ENCODE measurements at regions of chr4 and their contacts with region 1.

Region 1: DNA sequence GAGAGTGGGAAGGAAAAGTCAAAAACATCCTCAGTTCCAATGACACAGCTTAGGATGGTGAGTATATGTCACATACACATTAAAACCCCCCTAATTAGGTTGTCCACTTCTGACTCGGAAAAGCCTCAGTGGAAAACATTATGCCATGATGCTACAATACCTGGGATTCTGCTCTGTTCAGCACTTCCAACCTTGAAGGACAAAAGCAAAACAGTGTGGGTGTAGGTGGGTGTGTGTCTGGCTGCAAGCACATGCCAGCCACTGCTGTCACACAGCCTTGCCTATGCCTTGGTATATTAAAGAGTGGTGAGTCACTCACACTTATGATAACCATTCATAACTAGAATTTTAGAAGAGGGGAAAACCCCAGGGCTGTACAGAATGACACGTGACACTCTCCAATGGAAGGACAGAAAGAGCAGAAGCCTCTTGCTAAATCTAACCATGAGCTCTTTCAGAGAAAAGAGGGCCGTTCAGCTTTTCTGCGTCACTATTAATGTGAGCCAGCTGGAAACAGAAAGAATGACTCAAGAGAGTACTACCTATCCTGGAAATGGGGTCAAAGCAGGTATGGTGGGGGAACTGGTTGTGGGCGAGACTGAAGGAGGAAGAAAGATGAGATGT is 159.6 kb downstream of the TET2 start:
- DNase-seq: peak; percentile 84
- H3K4me3 Mint-ChIP-seq: no peak overlapping the region
- H3K27ac Mint-ChIP-seq: peak overlapping the region; percentile 87
- H3K4me1 Mint-ChIP-seq: peaks cover 24% of the 10 kb centered on the region
- H3K27me3 Mint-ChIP-seq: no peaks in the 10 kb centered on the region

Region 2: DNA sequence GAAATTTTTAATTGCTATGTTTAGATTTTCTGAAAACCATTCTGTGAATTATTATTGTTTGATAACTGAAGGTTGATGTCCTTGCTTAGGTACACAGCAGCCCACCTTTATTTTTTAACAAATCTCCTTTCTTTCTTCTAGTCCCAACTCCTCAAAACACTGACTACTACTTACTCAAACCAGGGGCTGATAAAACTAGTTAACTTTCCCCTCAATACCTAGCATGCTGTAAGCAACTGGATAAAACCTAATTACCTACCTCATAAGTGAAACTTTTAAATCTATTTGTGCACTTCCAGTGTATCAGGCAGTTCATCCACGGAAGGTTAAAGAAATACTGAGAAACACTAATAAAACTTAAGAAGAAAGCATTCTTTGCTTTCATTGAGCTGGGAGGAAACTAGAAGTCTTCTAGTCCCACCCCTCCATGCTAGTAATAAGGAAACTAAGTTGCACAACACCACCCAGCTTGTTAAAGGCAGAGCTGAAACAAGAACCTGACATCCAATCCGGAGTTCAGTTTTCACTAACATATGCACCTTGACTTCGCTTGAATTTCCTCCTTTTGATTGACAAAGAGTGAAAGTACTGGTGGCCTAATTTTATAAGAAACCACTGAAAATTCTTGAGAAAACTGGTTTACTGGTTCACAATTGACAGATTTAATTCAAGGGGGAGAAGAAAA is 339.8 kb before region 1 on chr4:
- CTCF ChIA-PET with region 1: no interaction called
- intact Hi-C with region 1: loop called (anchors 1 kb)
- DNase-seq: peak; percentile 73
- H3K4me3 Mint-ChIP-seq: no peak overlapping the region
- H3K27ac Mint-ChIP-seq: peak overlapping the region; percentile 82
- H3K4me1 Mint-ChIP-seq: peaks cover 12% of the 10 kb centered on the region
- H3K27me3 Mint-ChIP-seq: peaks cover 12% of the 10 kb centered on the region

Region 3: GRCh38 chr4:105191621-105192210 is 114.6 kb before region 1 on chr4:
- CTCF ChIA-PET with region 1: interaction called, 3 read pairs
- intact Hi-C with region 1: loop called (anchors 1 kb)
- DNase-seq: no peak
- H3K4me3 Mint-ChIP-seq: no peak overlapping the region
- H3K27ac Mint-ChIP-seq: peak overlapping the region; percentile 87
- H3K4me1 Mint-ChIP-seq: peaks cover 85% of the 10 kb centered on the region
- H3K27me3 Mint-ChIP-seq: no peaks in the 10 kb centered on the region

Region 4: DNA sequence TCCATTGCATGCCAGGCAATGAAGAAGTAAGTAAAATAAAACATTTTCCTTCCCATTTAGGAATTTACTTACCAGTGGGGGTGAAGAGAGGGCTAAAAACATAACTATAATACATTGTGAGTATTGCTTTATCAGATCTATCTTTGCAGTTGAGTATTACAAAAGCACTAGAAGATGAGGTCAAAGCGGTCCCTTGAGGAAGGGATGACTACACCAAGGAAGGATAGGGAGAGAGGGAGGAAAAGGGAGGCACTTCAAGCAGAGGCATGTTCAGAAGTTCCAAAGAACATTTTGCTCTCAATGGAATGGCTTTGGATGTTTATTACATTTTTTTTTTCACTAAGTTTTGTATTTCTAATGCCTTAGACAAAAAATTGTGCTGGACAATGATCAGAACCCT is 31.8 kb before region 1 on chr4:
- CTCF ChIA-PET with region 1: interaction called, 3 read pairs
- intact Hi-C with region 1: loop called (anchors 1 kb)
- DNase-seq: no peak
- H3K4me3 Mint-ChIP-seq: no peak overlapping the region
- H3K27ac Mint-ChIP-seq: peak overlapping the region; percentile 64
- H3K4me1 Mint-ChIP-seq: peaks cover 43% of the 10 kb centered on the region
- H3K27me3 Mint-ChIP-seq: no peaks in the 10 kb centered on the region

Region 5: DNA sequence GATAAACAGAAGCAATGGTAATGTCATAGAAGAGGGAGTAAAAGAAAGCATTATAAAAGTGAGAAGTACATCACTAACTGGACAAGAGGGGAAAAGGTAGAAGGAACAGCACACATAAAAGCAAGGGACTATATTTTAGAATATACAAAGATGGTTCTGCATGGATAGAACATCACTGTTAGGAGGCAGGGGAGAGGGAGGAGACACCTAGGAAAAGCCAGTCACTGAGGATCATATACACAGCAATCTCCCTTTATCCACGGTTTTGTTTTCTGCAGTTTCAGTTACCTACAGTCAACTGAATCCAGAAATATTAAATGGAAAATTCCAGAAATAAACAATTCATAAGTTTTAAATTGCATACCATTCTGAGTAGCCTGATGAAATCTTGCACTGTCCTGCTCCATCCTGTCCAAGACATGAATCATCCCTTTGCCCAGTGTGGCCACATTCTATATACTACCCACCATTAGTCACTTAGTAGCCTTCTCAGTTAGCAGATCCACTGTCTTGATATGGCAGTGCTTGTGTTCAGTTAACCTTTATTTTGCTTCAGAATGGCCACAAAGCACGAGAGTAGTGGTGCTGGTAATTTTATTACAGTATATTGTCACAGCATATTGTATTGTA is 93.4 kb after region 1 on chr4:
- CTCF ChIA-PET with region 1: no interaction called
- intact Hi-C with region 1: no loop called
- DNase-seq: no peak
- H3K4me3 Mint-ChIP-seq: no peak overlapping the region
- H3K27ac Mint-ChIP-seq: no peak overlapping the region
- H3K4me1 Mint-ChIP-seq: peaks cover 3% of the 10 kb centered on the region
- H3K27me3 Mint-ChIP-seq: no peaks in the 10 kb centered on the region

Region 6: DNA sequence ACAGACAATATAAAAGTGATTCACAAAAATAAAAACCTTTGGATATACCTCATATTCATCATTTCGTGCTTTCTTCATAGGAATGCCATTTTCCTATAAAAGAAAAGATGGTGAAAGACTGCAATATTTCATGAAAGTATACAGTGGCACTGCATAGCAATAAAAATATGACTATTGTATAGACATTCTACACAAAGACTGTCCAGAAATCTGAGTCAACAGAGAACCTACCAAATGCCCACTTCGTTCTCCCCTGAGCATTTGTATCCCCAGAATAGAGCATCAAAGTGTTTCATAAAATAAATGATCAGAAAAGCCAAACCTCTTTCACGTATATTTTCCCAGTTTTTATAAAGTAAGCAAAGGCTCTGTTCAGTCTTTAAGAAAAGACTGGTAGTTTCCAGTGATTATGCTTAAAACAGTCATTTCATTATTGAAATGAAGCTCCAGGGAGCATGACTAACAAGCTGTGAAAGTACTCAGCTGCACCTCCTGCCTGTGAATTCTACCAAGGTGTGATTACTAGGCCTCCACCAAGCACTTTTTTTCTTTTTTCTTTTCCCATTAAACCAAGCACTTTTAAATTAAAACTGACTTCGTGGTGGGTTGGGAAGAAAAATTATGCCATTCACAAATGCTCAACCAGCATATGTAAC is 147.4 kb after region 1 on chr4:
- CTCF ChIA-PET with region 1: no interaction called
- intact Hi-C with region 1: loop called (anchors 1 kb)
- DNase-seq: peak; percentile 63
- H3K4me3 Mint-ChIP-seq: no peak overlapping the region
- H3K27ac Mint-ChIP-seq: peak overlapping the region; percentile 47
- H3K4me1 Mint-ChIP-seq: peaks cover 41% of the 10 kb centered on the region
- H3K27me3 Mint-ChIP-seq: no peaks in the 10 kb centered on the region

Region 7: GRCh38 chr4:106315968-106316772 is 1009.9 kb after region 1 on chr4 and contains the starts of genes AIMP1 and TBCK:
- CTCF ChIA-PET with region 1: no interaction called
- intact Hi-C with region 1: loop called (anchors 2 kb)
- DNase-seq: peak; percentile 90
- H3K4me3 Mint-ChIP-seq: no peak within 1 kb of the TSS
- H3K27ac Mint-ChIP-seq: no peak within 1 kb of the TSS
- H3K4me1 Mint-ChIP-seq: peaks cover 45% of the 10 kb centered on the region
- H3K27me3 Mint-ChIP-seq: no peaks in the 10 kb centered on the region
- total RNA-seq, gene AIMP1: 49.7 to 52.0 TPM
- total RNA-seq, gene TBCK: 19.4 to 21.6 TPM

Measured in activated naive CD4-positive, alpha-beta T cell treated with anti-CD3 and anti-CD28 coated beads for 36 hours (primary cell).